GM12878 (cell line): ENCODE measurements at regions of chr17 and their contacts with region 1.

Region 1: GRCh38 chr17:48492401-48493298 is 38.2 kb downstream of the HOXB1 start:
- DNase-seq: no peak
- ATAC-seq: peak; percentile 98
- H3K4me3 ChIP-seq: peak overlapping the region; percentile 51; the same call in 1 of the 2 replicates
- H3K27ac ChIP-seq: no peak overlapping the region
- H3K4me1 ChIP-seq: peaks cover 20% of the 10 kb centered on the region
- H3K27me3 ChIP-seq: no peaks in the 10 kb centered on the region
- CTCF ChIP-seq: peak; percentile 84 to 94 (median 90)
- EP300 ChIP-seq: no peak
- POLR2A ChIP-seq: no peak
- RAD21 ChIP-seq: peak; percentile 79

Region 2: DNA sequence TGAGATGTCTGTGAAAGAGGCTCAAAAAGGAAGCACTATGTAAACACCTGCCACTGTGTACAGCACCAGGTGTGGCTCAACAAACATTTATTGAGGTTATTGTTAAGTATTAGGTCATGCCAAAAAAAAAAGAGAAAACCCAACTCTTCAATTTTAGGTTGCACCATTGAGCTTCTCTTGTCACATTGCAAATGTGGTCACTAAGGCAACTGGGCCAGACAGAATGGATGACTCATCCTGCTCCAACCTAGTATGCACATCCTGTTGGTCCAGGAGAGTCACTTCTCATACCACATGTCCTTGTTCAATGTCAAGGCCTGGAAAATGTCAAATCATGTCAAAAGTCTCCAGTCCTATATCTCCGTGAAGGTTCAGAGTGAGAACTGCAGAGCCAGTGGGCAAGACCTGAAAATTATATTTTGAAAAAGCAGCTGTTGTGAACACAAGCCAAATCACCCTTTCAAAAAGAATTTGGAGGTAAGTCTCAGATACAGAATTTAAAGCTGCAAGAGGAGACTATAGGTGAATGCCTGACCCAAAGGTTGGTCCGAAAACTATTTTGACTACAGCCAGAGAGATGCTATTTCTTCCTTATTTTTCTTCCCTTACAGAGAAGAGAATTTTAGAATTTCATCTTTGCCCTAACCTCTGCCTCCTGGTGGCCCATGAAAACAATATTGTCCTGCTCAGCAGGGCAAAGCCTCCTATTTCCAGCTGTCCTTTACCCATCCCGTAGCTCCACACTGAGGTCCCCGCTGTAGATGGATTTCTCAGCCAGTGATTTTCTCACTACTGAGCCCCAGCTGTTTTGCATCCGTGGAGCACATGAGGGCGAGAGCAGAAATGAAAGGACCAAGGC is 13.4 kb after region 1 on chr17:
- CTCF ChIA-PET with region 1: interaction called, 36 read pairs
- POLR2A ChIA-PET with region 1: interaction called, 7 read pairs
- RAD21 ChIA-PET with region 1: interaction called, 18 read pairs
- SMC1A ChIA-PET with region 1: interaction called, 9 read pairs
- in situ Hi-C with region 1: no loop called
- intact Hi-C with region 1: no loop called
- DNase-seq: peak; percentile 77
- ATAC-seq: peak; percentile 99
- H3K4me3 ChIP-seq: no peak overlapping the region
- H3K27ac ChIP-seq: no peak overlapping the region
- H3K4me1 ChIP-seq: peaks cover 26% of the 10 kb centered on the region
- H3K27me3 ChIP-seq: no peaks in the 10 kb centered on the region
- CTCF ChIP-seq: peak in 2 of 3 experiments; percentile 15 to 17; a peak in 1 of 6 replicates
- EP300 ChIP-seq: peak; percentile 49 to 82; a peak in 3 of 4 replicates
- POLR2A ChIP-seq: no peak
- RAD21 ChIP-seq: no peak

Region 3: DNA sequence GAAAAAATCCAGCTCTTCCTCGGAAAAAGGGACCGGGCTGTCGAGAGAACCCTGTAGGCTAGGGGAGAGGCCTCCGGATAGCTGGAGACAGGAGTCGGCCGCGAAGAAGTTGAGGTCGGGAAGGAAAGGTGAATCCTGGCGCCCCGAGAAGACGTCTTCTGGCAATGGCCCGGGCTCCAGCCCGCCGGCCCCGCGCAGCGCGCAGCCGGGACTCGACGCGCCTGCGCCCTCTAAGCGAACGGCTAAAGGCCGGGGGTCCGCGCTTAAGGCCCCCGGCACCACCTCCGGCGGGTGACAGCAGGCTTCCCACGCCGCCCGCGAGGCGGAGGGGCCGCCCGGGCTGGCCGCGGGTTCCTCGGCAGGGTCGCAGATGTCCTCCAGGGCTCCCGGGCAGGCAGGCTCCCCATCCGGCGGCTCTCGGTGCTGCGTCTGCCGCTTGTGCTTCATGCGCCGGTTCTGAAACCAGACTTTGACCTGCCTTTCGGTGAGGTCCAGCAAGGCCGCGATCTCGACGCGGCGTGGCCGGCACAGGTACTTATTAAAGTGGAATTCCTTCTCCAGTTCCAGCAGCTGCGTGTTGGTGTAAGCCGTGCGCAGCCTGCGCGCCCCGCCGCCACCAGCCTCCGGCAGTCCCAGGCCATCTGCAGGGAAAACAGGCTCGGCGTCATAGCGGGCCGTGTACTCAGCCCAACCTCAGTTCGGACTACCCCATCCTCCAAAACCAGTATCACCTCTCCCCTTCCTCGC is 50.6 kb after region 1 on chr17:
- CTCF ChIA-PET with region 1: interaction called, 12 read pairs
- POLR2A ChIA-PET with region 1: interaction called, 4 read pairs
- RAD21 ChIA-PET with region 1: interaction called, 18 read pairs
- SMC1A ChIA-PET with region 1: interaction called, 9 read pairs
- in situ Hi-C with region 1: no loop called
- intact Hi-C with region 1: loop called (anchors 5 kb)
- DNase-seq: no peak
- ATAC-seq: peak; percentile 81
- H3K4me3 ChIP-seq: peak overlapping the region; percentile 69
- H3K27ac ChIP-seq: peak overlapping the region; percentile 49
- H3K4me1 ChIP-seq: peaks cover 7% of the 10 kb centered on the region
- H3K27me3 ChIP-seq: peaks cover 0 to 4% of the 10 kb centered on the region in 2 experiments; a peak in 1 of 4 replicates
- CTCF ChIP-seq: peak in 2 of 3 experiments; percentile 18 to 42; a peak in 3 of 6 replicates
- EP300 ChIP-seq: no peak
- POLR2A ChIP-seq: peak; percentile 63
- RAD21 ChIP-seq: no peak

Region 4: DNA sequence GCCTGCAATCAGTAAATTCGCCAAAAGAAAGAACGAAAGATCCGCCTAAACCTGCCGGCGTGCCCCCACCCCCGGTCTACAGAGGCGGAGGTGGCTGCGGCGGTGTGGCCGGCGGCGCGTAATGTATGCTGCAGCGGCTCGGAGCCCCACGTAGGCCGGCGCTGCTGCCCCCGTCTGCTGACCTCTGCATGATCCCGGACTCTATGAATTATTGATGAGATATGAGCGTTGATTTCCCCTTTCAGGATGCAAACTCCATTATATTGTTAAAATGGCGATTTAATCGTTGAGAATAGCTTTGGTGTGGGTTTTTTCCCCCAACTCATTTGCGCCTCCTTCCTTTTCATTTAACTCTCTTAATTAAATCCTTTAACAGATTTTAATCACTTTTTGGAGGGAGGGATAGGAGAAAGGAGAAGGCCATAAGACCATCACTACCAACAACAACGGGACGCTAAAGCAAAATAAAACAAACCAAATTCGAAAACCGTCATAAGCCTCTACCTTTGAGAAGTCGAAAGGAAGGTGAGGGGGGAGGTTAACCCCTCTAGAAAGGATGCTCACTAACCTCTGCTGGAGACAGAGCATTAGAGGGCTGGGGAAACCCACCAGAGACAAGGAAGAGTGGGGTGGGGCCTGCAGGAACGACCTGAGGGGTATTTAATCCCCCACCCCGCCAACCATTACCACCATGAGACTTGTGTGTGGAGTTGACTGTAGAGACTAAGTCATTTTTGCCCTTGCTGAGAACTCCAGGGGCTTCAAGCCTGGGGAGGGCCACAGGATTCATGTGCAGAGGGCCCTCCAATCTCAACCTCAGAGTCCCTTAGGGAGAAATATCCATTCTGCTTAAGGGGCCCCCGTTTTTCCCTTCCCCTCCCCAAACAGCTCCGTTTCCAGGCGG is 94.0 kb after region 1 on chr17:
- CTCF ChIA-PET with region 1: interaction called, 17 read pairs
- POLR2A ChIA-PET with region 1: no interaction called
- RAD21 ChIA-PET with region 1: interaction called, 21 read pairs
- SMC1A ChIA-PET with region 1: interaction called, 8 read pairs
- in situ Hi-C with region 1: no loop called
- intact Hi-C with region 1: no loop called
- DNase-seq: no peak
- ATAC-seq: peak; percentile 59
- H3K4me3 ChIP-seq: peak overlapping the region; percentile 64
- H3K27ac ChIP-seq: no peak overlapping the region
- H3K4me1 ChIP-seq: peaks cover 3% of the 10 kb centered on the region
- H3K27me3 ChIP-seq: peaks cover 0 to 4% of the 10 kb centered on the region in 2 experiments; a peak in 1 of 4 replicates
- CTCF ChIP-seq: no peak
- EP300 ChIP-seq: no peak
- POLR2A ChIP-seq: no peak
- RAD21 ChIP-seq: no peak

Region 5: DNA sequence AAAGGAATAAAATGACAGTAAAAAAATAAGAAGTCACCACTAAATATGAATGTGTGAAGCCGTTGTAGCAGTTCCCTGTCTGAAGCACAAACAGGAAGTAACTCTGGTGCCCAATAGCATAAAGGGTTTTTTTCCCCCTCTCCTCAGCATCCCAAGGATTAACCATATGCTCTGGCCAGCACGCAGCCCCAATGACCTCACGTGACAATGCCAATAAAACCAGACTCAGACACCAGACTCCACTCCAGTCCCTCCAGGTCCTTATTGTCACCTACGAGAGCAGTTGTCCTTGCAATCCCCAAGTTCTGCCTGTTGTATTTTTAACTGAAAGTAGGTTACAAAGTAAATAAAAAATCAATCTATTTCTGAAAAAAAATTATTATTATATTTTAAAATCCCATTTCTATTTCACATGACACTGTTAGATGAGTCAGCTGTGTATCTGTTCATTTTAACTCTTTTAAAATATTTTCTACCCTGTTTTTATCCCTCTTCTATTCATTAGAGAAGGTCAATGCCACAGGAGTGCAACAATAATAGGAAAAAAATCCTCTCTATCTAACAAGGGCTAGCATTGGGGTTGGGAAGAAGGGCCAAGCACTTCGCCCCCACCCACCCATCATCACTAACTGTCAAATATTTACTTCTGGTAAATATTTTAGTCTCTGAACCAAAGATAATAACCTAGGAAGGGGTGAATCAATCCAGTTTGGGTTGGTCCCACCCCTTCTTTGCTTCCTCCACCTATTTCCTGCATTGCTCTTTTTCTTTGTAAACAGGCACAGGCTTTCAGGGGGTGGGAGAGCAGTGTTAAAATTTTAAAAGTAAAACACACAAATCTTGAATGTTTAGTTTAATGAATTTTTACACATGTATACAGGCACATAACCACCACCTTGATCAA is 223.1 kb after region 1 on chr17:
- CTCF ChIA-PET with region 1: no interaction called
- POLR2A ChIA-PET with region 1: no interaction called
- RAD21 ChIA-PET with region 1: no interaction called
- SMC1A ChIA-PET with region 1: no interaction called
- in situ Hi-C with region 1: no loop called
- intact Hi-C with region 1: no loop called
- DNase-seq: no peak
- ATAC-seq: no peak
- H3K4me3 ChIP-seq: no peak overlapping the region
- H3K27ac ChIP-seq: no peak overlapping the region
- H3K4me1 ChIP-seq: no peaks in the 10 kb centered on the region
- H3K27me3 ChIP-seq: peaks cover 20 to 33% of the 10 kb centered on the region in 2 experiments
- CTCF ChIP-seq: no peak
- EP300 ChIP-seq: no peak
- POLR2A ChIP-seq: no peak
- RAD21 ChIP-seq: no peak